MCF 10A (cell line): ENCODE measurements at regions of chr13 and their contacts with region 1.

Region 1: DNA sequence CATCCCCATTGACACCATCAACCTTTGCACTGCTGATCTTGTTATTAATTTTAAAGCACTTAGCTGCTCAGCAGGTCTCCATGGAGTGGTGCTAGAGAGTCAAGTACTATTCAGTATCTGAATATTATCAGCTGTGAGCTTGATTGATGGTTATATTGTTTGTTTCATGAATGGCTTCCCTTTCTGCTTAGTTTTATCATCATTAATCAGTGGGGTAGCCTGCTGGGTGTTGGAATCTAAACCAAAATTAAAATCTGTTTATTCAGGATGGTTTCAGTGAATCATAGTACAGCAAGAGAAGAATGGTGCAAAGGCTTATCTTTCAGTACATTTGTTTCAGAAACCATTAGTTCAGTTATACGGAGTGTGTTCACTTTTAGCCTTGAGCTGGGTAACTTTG is 42.5 kb upstream of the SCEL start:
- DNase-seq: peak; percentile 49
- H3K4me3 Mint-ChIP-seq: no peak overlapping the region
- H3K27ac Mint-ChIP-seq: no peak overlapping the region
- H3K4me1 Mint-ChIP-seq: no peaks in the 10 kb centered on the region
- H3K27me3 Mint-ChIP-seq: peaks cover 80% of the 10 kb centered on the region
- CTCF ChIP-seq: peak; percentile 58

Region 2: GRCh38 chr13:76848596-76848995 is 644.4 kb before region 1 on chr13:
- CTCF ChIA-PET with region 1: no interaction called
- POLR2A ChIA-PET with region 1: no interaction called
- intact Hi-C with region 1: no loop called
- DNase-seq: peak; percentile 39
- H3K4me3 Mint-ChIP-seq: no peak overlapping the region
- H3K27ac Mint-ChIP-seq: no peak overlapping the region
- H3K4me1 Mint-ChIP-seq: peaks cover 18% of the 10 kb centered on the region
- H3K27me3 Mint-ChIP-seq: no peaks in the 10 kb centered on the region
- CTCF ChIP-seq: no peak

Region 3: GRCh38 chr13:77389625-77390000 is 103.4 kb before region 1 on chr13:
- CTCF ChIA-PET with region 1: no interaction called
- POLR2A ChIA-PET with region 1: no interaction called
- intact Hi-C with region 1: no loop called
- DNase-seq: no peak
- H3K4me3 Mint-ChIP-seq: no peak overlapping the region
- H3K27ac Mint-ChIP-seq: no peak overlapping the region
- H3K4me1 Mint-ChIP-seq: no peaks in the 10 kb centered on the region
- H3K27me3 Mint-ChIP-seq: peaks cover 95% of the 10 kb centered on the region
- CTCF ChIP-seq: no peak

Region 4: GRCh38 chr13:77409412-77409811 is 83.6 kb before region 1 on chr13:
- CTCF ChIA-PET with region 1: no interaction called
- POLR2A ChIA-PET with region 1: no interaction called
- intact Hi-C with region 1: no loop called
- DNase-seq: no peak
- H3K4me3 Mint-ChIP-seq: no peak overlapping the region
- H3K27ac Mint-ChIP-seq: no peak overlapping the region
- H3K4me1 Mint-ChIP-seq: no peaks in the 10 kb centered on the region
- H3K27me3 Mint-ChIP-seq: peaks cover 52% of the 10 kb centered on the region
- CTCF ChIP-seq: no peak

Region 5: GRCh38 chr13:77480066-77480465 is 12.9 kb before region 1 on chr13:
- CTCF ChIA-PET with region 1: interaction called, 47 read pairs
- POLR2A ChIA-PET with region 1: no interaction called
- intact Hi-C with region 1: no loop called
- DNase-seq: no peak
- H3K4me3 Mint-ChIP-seq: no peak overlapping the region
- H3K27ac Mint-ChIP-seq: no peak overlapping the region
- H3K4me1 Mint-ChIP-seq: peaks cover 5% of the 10 kb centered on the region
- H3K27me3 Mint-ChIP-seq: peaks cover 25% of the 10 kb centered on the region
- CTCF ChIP-seq: no peak

Region 6: DNA sequence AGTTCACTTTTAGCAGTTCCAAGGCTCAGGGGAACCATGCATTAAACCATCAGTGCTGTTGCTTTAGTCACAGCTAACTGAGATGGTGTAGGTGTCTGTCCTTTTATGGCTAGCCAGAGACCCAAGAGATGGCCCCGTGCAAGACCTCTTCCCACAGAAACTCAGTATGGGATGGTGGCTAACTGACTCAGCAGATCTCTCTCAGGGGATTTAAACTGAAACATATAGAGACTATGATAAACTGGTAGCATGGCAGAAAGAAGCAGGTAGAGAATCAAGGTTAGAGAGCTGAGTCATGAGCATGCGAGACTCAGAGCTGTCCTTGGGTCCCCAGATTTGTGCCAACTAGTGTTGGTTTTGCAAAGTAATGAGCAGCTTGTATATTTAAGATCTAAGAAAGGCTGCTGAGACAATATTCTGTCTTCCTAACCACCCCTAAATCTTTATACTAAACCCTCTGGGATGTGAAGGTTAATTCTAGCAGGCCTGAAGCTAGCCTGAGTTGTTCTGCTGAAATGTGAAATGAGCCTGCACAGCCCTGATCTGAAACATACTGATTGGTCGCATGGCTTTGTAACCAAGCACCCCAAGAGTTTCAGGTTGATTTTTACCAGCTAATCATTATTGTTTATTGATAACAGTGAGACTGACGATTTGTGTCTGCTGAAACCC is 36.0 kb after region 1 on chr13:
- CTCF ChIA-PET with region 1: interaction called, 16 read pairs
- POLR2A ChIA-PET with region 1: no interaction called
- intact Hi-C with region 1: no loop called
- DNase-seq: no peak
- H3K4me3 Mint-ChIP-seq: no peak overlapping the region
- H3K27ac Mint-ChIP-seq: no peak overlapping the region
- H3K4me1 Mint-ChIP-seq: peaks cover 4% of the 10 kb centered on the region
- H3K27me3 Mint-ChIP-seq: no peaks in the 10 kb centered on the region
- CTCF ChIP-seq: no peak

Region 7: DNA sequence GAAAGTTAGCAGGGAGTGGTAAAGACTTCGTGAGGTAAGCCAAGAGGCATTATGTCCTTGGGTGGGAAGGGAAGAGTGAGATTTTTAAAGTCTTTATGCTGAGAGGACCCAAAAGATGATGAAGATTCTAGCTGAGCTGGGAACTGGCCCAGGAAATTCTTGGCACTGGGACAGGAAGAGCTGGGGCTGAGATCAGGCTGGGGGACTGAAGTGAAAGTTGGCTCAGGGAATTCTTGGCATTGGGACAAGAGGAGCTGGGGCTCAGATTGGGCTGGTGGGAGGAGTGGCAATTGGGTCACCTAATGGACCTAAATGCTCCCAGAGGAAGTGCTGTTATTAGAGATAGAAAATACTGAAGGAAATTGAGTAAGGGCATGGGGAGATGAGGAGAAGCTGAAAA is 51.4 kb after region 1 on chr13:
- CTCF ChIA-PET with region 1: interaction called, 13 read pairs
- POLR2A ChIA-PET with region 1: no interaction called
- intact Hi-C with region 1: no loop called
- DNase-seq: peak; percentile 66
- H3K4me3 Mint-ChIP-seq: no peak overlapping the region
- H3K27ac Mint-ChIP-seq: no peak overlapping the region
- H3K4me1 Mint-ChIP-seq: peaks cover 14% of the 10 kb centered on the region
- H3K27me3 Mint-ChIP-seq: peaks cover 45% of the 10 kb centered on the region
- CTCF ChIP-seq: no peak

Region 8: GRCh38 chr13:77565635-77566034 is 72.7 kb after region 1 on chr13:
- CTCF ChIA-PET with region 1: interaction called, 113 read pairs
- POLR2A ChIA-PET with region 1: interaction called, 3 read pairs
- intact Hi-C with region 1: loop called (anchors 1 kb)
- DNase-seq: peak; percentile 62
- H3K4me3 Mint-ChIP-seq: no peak overlapping the region
- H3K27ac Mint-ChIP-seq: no peak overlapping the region
- H3K4me1 Mint-ChIP-seq: no peaks in the 10 kb centered on the region
- H3K27me3 Mint-ChIP-seq: peaks cover 58% of the 10 kb centered on the region
- CTCF ChIP-seq: peak; percentile 69

Region 9: DNA sequence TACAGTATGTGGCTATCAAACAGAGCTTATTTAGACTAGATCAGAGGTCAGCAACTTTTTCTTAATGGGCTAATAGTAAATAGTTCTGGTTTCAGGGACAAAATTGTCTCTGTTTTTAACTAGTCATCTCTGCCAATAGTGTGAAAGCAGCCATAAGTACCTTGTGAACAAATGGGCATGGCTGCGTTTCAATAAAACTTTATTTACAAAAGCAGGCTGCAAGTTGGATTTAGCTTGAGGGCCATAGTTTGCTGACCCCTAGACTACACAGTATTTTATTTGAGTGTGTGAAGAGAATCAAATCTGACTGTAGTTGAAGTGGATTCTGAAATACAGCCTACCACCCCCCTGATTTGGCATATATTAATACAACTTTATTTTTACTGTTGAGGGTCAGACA is 118.1 kb after region 1 on chr13:
- CTCF ChIA-PET with region 1: no interaction called
- POLR2A ChIA-PET with region 1: no interaction called
- intact Hi-C with region 1: no loop called
- DNase-seq: no peak
- H3K4me3 Mint-ChIP-seq: no peak overlapping the region
- H3K27ac Mint-ChIP-seq: no peak overlapping the region
- H3K4me1 Mint-ChIP-seq: no peaks in the 10 kb centered on the region
- H3K27me3 Mint-ChIP-seq: no peaks in the 10 kb centered on the region
- CTCF ChIP-seq: no peak

Region 10: DNA sequence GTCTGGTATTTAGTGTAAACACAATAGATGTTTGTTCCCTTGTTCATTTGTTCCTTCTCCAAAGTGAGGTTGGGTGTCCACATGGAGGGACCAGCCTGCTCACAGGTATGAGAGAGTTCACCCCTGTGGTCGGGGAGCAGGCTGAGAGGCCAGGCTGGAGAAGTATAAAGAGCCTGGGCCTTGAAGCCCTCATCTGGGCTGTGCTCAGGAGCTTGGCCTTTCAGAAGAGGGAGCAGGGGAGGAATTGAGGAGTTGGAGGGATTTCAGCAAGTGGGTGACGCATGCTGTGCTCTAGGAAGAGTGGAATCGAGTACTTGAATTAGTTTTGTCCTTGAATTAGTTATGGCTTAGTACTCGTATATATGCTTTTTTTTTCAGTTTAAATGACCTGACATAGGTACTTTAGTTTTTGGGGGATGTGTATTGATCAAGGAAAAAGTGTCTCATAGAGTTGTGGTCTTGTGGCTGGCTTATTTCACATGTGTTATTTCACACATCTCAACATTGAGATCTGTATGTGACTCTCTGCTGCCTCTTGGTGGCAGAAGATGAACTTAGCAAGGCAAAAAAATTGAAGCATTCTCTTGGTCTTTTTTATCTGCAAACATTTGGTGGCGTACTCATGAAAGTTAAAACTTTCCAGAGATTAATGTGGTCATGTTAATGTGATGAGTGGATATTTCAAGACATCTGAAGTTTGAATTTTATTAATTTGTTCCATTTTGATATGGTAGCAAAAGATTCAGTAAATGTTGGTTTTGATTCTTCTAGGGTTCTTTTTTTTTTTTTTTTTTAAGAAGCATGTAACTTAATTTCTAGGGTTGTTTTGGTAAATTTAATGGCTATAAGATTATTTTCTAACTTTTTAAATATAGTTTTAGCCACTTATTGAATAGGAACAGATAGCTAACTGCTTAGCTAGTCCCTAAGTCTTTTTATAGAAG is 258.8 kb after region 1 on chr13:
- CTCF ChIA-PET with region 1: interaction called, 4 read pairs
- POLR2A ChIA-PET with region 1: no interaction called
- intact Hi-C with region 1: loop called (anchors 5 kb)
- DNase-seq: peak; percentile 67
- H3K4me3 Mint-ChIP-seq: no peak overlapping the region
- H3K27ac Mint-ChIP-seq: no peak overlapping the region
- H3K4me1 Mint-ChIP-seq: no peaks in the 10 kb centered on the region
- H3K27me3 Mint-ChIP-seq: peaks cover 86% of the 10 kb centered on the region
- CTCF ChIP-seq: peak; percentile 65